GM12878 (cell line): ENCODE measurements at regions of chr14 and their contacts with region 1.

Region 1: DNA sequence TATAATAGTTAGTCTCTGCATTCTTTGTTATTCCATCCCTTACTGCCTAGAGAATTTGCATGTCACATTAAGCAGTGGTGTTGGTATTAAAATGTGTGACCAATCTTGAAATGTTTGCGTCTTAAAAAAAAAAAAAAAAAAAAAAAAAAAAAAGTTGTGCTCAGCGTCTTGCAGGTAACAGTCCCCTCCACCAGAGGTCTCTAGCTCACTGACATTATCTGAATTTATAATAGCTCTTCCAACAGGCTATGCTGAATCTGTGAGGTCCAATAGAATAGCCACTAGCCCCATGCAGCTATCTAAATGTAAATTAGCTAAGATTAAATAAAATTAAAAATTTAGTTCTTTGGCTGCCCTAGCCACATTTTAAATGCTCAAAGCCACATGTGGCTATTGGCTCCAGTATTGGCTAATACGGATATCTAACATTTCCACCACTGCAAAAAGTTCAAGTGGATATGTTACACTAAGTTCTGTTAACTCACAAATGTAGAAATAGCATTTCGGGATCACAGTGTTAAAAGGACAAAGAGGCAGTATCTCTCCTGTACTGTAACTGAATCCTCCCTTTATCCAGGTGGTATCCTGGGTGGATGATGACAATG is 28.7 kb downstream of the NKX2-8 start:
- DNase-seq: no peak
- ATAC-seq: peak; percentile 73
- H3K4me3 ChIP-seq: no peak overlapping the region
- H3K27ac ChIP-seq: no peak overlapping the region
- H3K4me1 ChIP-seq: no peaks in the 10 kb centered on the region
- H3K27me3 ChIP-seq: no peaks in the 10 kb centered on the region
- CTCF ChIP-seq: peak; percentile 48 to 71 (median 62); a peak in 5 of 6 replicates
- EP300 ChIP-seq: no peak
- POLR2A ChIP-seq: no peak
- RAD21 ChIP-seq: peak; percentile 61

Region 2: GRCh38 chr14:36524874-36525745 is 28.6 kb before region 1 on chr14:
- CTCF ChIA-PET with region 1: interaction called, 13 read pairs
- POLR2A ChIA-PET with region 1: no interaction called
- RAD21 ChIA-PET with region 1: no interaction called
- SMC1A ChIA-PET with region 1: no interaction called
- in situ Hi-C with region 1: no loop called
- intact Hi-C with region 1: no loop called
- DNase-seq: no peak
- ATAC-seq: peak; percentile 56
- H3K4me3 ChIP-seq: no peak overlapping the region
- H3K27ac ChIP-seq: no peak overlapping the region
- H3K4me1 ChIP-seq: no peaks in the 10 kb centered on the region
- H3K27me3 ChIP-seq: peaks cover 6 to 17% of the 10 kb centered on the region in 2 experiments
- CTCF ChIP-seq: peak; percentile 10 to 35 (median 30); a peak in 3 of 6 replicates
- EP300 ChIP-seq: no peak
- POLR2A ChIP-seq: no peak
- RAD21 ChIP-seq: 0 out of 2 replicates have a peak, but pooled peaks have one; percentile 9

Region 3: DNA sequence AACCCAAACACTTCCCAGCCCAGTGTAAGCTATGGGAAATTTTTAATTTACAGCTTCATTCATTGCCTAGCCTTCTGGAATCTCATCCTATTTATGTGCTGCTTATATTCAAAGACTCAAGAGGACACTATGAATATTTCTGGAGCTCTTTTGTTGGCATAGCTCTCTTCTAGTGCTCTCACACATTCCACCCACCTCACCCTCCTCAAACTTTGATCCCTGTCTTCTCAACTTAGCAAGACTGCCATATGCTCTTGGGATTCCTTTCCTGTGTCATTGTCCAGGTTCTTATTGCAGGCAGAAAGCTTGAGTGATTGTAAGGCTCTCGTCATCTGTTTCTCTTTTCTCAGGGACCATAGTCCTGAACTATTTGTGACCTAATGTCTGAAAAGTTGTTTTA is 15.7 kb before region 1 on chr14:
- CTCF ChIA-PET with region 1: interaction called, 17 read pairs
- POLR2A ChIA-PET with region 1: no interaction called
- RAD21 ChIA-PET with region 1: no interaction called
- SMC1A ChIA-PET with region 1: interaction called, 4 read pairs
- in situ Hi-C with region 1: no loop called
- intact Hi-C with region 1: no loop called
- DNase-seq: no peak
- ATAC-seq: no peak
- H3K4me3 ChIP-seq: no peak overlapping the region
- H3K27ac ChIP-seq: no peak overlapping the region
- H3K4me1 ChIP-seq: no peaks in the 10 kb centered on the region
- H3K27me3 ChIP-seq: no peaks in the 10 kb centered on the region
- CTCF ChIP-seq: no peak
- EP300 ChIP-seq: no peak
- POLR2A ChIP-seq: no peak
- RAD21 ChIP-seq: no peak

Region 4: DNA sequence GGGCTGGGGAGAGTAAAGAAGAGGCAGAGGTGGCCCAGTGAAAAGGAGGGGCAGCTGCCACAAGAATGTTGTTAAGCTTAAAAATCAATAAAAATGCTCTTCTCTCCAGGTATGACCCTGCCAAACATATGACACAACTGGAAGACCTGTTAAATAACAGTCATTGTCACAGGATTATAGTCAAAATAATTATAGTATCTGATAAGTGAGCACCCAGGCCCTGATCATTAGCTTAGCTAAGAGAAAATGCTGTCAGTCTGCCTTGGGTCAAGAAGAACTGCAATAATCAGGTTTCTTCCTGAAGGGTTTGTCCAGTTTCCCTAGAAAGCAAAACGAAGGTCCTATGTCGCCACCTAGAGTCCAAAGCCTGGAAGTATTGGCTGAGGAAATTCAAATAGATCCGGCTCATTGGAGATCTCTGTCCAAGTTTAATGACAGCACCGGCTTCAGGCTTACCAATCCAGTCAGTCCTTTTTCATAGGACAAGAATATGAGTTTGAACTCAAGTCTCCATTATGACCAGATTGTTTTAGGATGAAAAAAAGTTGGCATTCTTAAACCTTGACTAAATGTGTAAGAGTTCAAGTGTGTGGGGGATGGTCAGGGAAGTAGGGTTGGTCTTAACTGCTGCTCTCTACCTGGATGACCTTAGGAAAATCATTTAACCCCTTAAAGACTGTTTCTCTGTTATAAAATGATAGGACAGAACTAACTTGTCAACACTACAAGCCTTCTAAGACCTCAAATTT is 51.2 kb after region 1 on chr14:
- CTCF ChIA-PET with region 1: interaction called, 75 read pairs
- POLR2A ChIA-PET with region 1: no interaction called
- RAD21 ChIA-PET with region 1: interaction called, 3 read pairs
- SMC1A ChIA-PET with region 1: interaction called, 5 read pairs
- in situ Hi-C with region 1: no loop called
- intact Hi-C with region 1: loop called (anchors 1 kb)
- DNase-seq: no peak
- ATAC-seq: peak; percentile 82
- H3K4me3 ChIP-seq: no peak overlapping the region
- H3K27ac ChIP-seq: no peak overlapping the region
- H3K4me1 ChIP-seq: no peaks in the 10 kb centered on the region
- H3K27me3 ChIP-seq: no peaks in the 10 kb centered on the region
- CTCF ChIP-seq: peak; percentile 80 to 82 (median 80)
- EP300 ChIP-seq: no peak
- POLR2A ChIP-seq: no peak
- RAD21 ChIP-seq: peak; percentile 86

Region 5: GRCh38 chr14:36747411-36748184 is 193.8 kb after region 1 on chr14:
- CTCF ChIA-PET with region 1: interaction called, 10 read pairs
- POLR2A ChIA-PET with region 1: no interaction called
- RAD21 ChIA-PET with region 1: interaction called, 3 read pairs
- SMC1A ChIA-PET with region 1: no interaction called
- in situ Hi-C with region 1: no loop called
- intact Hi-C with region 1: no loop called
- DNase-seq: no peak
- ATAC-seq: no peak
- H3K4me3 ChIP-seq: no peak overlapping the region
- H3K27ac ChIP-seq: no peak overlapping the region
- H3K4me1 ChIP-seq: no peaks in the 10 kb centered on the region
- H3K27me3 ChIP-seq: no peaks in the 10 kb centered on the region
- CTCF ChIP-seq: peak; percentile 28 to 48 (median 32); a peak in 4 of 6 replicates
- EP300 ChIP-seq: no peak
- POLR2A ChIP-seq: no peak
- RAD21 ChIP-seq: no peak

Region 6: DNA sequence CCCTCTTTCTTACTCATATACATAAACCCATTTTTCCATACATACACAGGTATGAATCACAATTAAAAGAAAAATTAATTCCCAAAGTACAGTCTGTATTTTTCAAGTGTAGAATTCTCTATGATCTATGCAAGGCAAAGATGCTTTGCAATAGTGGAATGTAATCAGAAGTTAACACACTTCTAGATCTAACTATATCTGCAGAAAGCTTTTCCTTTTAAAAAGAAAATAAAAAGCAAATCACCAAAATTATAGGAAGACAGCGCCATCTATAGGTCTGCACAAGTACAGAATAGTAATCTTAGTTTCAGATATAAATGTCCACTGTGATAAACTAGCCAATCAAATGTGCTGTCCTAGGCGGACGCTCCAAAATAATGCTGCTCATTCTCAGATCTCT is 596.7 kb after region 1 on chr14:
- CTCF ChIA-PET with region 1: interaction called, 44 read pairs
- POLR2A ChIA-PET with region 1: no interaction called
- RAD21 ChIA-PET with region 1: interaction called, 3 read pairs
- SMC1A ChIA-PET with region 1: interaction called, 11 read pairs
- in situ Hi-C with region 1: loop called (anchors 10 kb)
- intact Hi-C with region 1: loop called (anchors 5 kb)
- DNase-seq: no peak
- ATAC-seq: peak; percentile 57
- H3K4me3 ChIP-seq: no peak overlapping the region
- H3K27ac ChIP-seq: no peak overlapping the region
- H3K4me1 ChIP-seq: no peaks in the 10 kb centered on the region
- H3K27me3 ChIP-seq: no peaks in the 10 kb centered on the region
- CTCF ChIP-seq: peak; percentile 32 to 45 (median 41); a peak in 4 of 6 replicates
- EP300 ChIP-seq: no peak
- POLR2A ChIP-seq: no peak
- RAD21 ChIP-seq: peak; percentile 49